Posterior vena cava (tissue), 2 donors: ENCODE measurements at regions of chr14 and their contacts with region 1.

Region 1: DNA sequence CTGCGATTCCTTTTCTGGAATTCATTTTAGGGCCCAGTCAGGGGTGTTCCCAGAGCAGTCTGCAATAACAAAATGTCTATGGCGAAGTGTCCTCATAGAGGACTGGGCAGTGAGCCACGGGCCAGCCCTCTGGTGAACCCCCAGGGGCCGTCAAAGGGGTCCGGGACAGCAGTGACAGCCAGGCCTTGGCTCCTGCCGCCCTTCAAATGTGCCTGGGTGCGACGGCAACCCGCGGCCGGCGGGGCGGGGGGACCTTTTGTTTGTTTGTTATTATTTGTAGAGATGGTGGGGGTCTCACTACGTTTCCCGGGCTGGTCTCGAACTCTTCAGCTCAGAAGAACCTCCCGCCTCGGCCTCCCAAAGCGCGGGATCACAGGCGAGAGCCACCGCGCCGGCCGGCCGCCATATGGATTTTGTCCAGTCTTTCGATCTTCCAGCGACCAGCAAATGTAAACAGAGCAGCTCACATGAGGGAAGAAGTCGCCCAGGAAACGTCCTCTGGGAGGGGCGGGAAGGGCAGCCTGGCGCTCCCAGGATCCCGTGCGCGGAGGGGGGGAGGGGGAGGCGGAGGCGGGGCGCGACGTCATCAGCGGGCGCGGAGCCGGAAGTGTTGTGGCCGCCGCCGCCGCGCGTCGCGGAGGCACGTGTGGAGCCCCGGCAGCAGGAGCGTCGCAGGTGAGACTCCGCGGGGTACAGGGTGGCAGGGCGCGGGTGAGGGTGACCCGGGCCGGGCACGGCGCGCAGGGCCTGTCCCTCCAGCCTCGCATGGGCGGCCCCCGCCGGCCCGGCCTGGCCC is at the start of gene TRMT61A:
- DNase-seq: peak; percentile 96
- total RNA-seq, gene TRMT61A: 16.2 to 18.0 TPM

Region 2: DNA sequence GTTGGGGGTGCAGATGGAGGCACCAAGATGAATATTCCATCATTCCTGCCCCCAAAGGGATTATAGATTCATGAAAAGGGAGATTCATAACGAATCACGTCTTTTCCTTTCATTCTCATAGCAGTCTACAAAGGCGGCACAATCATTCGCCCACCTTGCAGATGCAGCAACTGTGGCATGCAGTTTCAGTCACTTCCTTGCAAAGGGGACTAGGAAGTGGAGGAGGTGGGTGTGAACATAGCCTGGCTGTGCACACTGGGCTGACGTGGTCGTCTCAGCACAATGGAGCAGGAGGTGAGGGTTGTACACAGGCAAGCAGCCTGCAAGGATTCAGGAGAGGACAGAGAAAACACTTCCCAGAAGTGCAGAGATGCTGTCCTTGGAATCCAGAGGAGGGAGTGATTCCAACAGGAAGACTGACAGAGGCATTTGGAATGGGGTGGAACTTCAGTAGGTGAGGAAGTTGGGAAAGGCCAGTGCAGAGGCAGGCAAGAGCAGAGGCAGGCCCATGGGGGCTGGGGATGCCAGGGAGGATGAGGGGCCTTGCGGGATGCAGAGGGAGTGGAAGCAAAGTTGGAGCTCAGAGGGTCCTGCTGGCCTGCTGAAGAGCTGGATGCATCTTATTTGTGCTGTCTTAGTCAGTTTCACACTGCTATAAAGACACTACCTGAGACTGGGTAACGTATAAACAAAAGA is 1789.2 kb before region 1 on chr14:
- intact Hi-C with region 1: loop called in 1 of 2 experiments (anchors 5 kb)
- DNase-seq: no peak